Activated CD4-positive, alpha-beta memory T cell treated with anti-CD3 and anti-CD28 coated beads, Interleukin-2, amount 10 ng/mL, durations not matched to agents 7 days and 5 days (primary cell): ENCODE measurements at regions of chr6 and their contacts with region 1.

Region 1: GRCh38 chr6:32952817-32953739 is at the start of gene HLA-DMA:
- DNase-seq: peak; percentile 83
- H3K4me3 Mint-ChIP-seq: peak within 1 kb of the TSS; percentile 81
- H3K27ac Mint-ChIP-seq: peak within 1 kb of the TSS; percentile 67
- H3K4me1 Mint-ChIP-seq: peaks cover 56% of the 10 kb centered on the region
- H3K27me3 Mint-ChIP-seq: no peaks in the 10 kb centered on the region
- total RNA-seq, gene HLA-DMA: 54.0 to 54.3 TPM

Region 2: DNA sequence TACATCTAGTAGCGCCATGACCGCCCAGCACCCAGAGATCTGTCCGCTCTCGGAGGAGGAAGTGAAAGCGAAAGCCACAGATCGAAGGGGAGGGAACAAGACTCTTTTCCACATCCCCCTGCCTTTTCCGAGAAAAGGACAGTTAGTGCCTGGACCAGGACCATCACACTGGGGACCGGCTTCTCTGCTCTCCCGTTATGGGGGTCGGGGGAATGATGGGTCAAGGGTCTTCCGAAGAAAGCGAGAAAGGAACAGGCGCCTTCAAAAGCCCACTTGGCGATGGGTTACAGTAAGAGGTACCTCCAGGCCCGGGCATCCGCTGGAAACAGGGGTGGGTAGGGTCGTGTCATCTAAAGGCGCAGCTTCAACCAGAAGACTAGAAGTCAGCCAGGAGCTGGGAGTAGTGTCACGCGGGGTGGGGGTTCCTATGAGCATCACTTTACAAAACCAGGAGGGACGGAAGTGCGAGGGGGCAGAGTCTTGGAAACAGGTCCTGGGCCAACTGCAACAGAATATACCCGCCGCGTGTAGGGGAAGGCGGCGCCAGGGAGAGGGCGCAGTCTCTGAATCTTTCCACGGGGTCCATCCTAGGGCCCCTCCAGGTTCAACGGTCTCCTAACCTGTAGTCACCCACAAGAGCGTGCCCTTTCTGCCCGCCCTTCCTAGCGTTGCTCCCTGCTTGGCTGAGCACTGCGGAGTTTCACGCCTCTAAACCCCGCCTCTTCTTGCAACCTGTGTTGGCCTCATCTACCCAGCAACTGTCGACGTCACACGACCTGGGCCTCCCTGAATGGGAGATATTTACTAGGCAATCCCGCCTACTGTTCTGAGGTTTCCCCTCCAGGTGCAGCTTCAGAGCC is 108.9 kb before region 1 on chr6 and contains the start of gene PSMB8:
- CTCF ChIA-PET with region 1: interaction called, 37 read pairs
- POLR2A ChIA-PET with region 1: interaction called, 19 read pairs
- DNase-seq: peak; percentile 99
- H3K4me3 Mint-ChIP-seq: peak within 1 kb of the TSS; percentile 97
- H3K27ac Mint-ChIP-seq: peak within 1 kb of the TSS; percentile 99
- H3K4me1 Mint-ChIP-seq: peaks cover 69% of the 10 kb centered on the region
- H3K27me3 Mint-ChIP-seq: no peaks in the 10 kb centered on the region
- total RNA-seq, gene PSMB8: 389 to 401 TPM

Region 3: DNA sequence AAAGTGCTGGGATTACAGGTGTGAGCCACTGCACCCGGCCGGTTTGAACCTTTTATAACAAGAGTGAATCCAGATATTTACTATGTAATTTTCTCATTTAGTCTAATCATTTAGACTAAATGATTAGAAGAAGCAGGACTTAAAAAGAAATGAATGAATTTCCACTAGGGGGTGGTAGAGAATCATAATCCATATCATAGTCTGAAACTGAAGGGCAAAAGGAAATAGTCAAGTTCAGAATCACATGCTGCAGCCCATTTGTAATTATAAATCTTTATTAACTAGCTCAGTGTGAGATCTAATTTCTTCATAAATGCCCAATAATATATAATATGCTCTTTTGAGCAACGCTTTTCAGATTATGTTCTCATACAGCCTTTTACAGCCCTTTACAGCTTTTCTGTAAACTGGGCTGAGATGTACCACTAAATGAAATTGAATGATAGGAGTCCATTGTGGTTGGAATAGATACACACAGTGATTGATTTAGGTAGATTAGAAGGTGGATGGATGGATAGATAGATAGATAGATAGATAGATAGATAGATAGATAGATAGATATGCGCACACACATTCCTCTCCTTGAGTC is 67.3 kb before region 1 on chr6:
- CTCF ChIA-PET with region 1: interaction called, 43 read pairs
- POLR2A ChIA-PET with region 1: interaction called, 4 read pairs
- DNase-seq: no peak
- H3K4me3 Mint-ChIP-seq: no peak overlapping the region
- H3K27ac Mint-ChIP-seq: no peak overlapping the region
- H3K4me1 Mint-ChIP-seq: peaks cover 2% of the 10 kb centered on the region
- H3K27me3 Mint-ChIP-seq: peaks cover 4% of the 10 kb centered on the region

Region 4: DNA sequence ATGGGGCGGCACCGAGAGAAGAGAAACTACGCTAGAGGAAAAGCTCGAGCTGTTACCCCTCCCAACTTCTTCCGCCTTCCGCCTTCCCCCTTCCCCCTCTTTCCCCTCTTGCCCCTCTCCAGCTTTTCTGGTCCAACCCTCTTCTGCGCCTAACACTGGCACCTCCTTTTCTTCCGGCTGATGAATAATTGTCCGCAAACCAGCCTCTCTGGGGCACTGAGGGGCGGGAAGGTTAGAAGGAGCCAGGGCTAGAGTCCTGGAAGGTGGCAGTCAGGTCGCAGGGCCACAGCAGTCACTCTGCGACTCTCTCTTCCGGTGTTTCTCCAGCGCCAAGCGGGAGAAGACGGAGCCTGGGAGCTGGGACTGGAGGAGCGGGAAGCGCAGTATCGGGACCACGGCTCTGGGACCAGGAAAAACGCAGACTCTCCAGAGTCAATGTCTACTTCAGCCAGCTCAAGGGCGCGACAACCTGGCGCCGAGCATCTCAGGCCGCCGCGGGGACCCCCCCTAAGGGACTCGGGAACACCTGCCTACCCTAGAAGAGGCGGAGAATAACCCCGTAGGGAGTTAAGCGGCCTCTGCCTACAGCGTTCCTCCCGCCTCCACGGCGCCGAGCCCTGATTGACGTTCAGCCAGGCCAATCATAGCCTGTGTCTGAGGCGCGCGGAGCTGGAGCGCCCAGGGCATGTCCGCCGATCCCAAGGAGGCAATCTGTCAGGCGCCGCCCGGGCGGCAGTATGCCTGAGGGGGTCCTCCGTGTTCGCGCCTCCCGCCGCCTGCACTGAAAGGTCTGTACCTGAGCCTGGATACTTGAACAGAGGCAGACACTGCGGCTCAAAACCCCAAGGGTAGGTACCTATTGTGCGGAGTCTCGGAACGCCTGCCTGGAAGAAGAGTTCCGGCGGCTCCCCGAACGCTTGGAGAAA is 58.7 kb before region 1 on chr6:
- CTCF ChIA-PET with region 1: interaction called, 21 read pairs
- POLR2A ChIA-PET with region 1: interaction called, 26 read pairs
- DNase-seq: peak; percentile 95
- H3K4me3 Mint-ChIP-seq: peak overlapping the region; percentile 99
- H3K27ac Mint-ChIP-seq: peak overlapping the region; percentile 91
- H3K4me1 Mint-ChIP-seq: peaks cover 40% of the 10 kb centered on the region
- H3K27me3 Mint-ChIP-seq: peaks cover 8% of the 10 kb centered on the region

Region 5: DNA sequence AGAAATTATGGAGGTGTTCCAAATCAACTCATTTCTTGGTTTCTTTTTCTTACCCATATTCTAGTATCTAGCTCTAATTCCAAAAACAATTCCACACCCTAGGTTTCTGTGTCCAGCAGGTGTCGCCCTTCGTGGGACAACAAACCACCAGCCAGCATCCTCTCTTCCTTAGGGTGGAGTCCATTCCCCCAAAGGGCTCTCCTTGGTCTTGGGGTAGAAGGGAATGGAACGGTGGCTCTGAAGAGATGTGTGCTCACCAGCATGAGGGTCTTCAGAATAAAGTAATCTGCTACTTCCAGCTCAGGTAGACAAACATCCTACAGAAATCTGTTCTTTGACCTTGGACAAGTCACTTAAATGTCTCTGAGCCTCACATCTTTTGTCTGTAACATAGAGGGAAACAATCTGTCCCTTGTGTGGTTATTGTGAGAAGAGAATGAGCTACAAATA is 19.4 kb before region 1 on chr6:
- CTCF ChIA-PET with region 1: interaction called, 181 read pairs
- POLR2A ChIA-PET with region 1: interaction called, 15 read pairs
- DNase-seq: peak; percentile 79
- H3K4me3 Mint-ChIP-seq: no peak overlapping the region
- H3K27ac Mint-ChIP-seq: no peak overlapping the region
- H3K4me1 Mint-ChIP-seq: peaks cover 16% of the 10 kb centered on the region
- H3K27me3 Mint-ChIP-seq: peaks cover 2% of the 10 kb centered on the region

Region 6: GRCh38 chr6:32940656-32941213 is 12.3 kb before region 1 on chr6 and contains the start of gene HLA-DMB:
- CTCF ChIA-PET with region 1: interaction called, 136 read pairs
- POLR2A ChIA-PET with region 1: interaction called, 84 read pairs
- DNase-seq: peak; percentile 60
- H3K4me3 Mint-ChIP-seq: peak within 1 kb of the TSS; percentile 82
- H3K27ac Mint-ChIP-seq: peak within 1 kb of the TSS; percentile 94
- H3K4me1 Mint-ChIP-seq: peaks cover 59% of the 10 kb centered on the region
- H3K27me3 Mint-ChIP-seq: no peaks in the 10 kb centered on the region
- total RNA-seq, gene HLA-DMB: 19.1 to 20.0 TPM

Region 7: DNA sequence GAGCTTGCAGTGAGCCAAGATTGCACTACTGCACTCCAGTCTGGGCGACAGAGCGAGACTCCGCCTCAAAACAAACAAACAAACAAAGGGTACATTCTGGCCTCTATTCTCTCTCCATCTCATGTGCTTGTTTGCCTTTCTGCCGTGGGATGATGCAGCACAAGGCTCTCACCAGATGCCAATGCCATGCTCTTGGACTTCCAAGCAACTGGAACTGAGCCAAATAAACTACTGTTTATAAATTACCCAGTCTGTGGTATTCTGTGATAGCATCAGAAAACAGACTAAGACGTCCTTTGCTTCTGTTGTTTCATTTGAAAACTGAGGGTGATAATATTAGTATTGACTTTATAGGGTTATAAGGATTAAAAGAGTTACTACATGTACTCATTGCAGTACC is 11.7 kb after region 1 on chr6:
- CTCF ChIA-PET with region 1: interaction called, 259 read pairs
- POLR2A ChIA-PET with region 1: interaction called, 538 read pairs
- DNase-seq: no peak
- H3K4me3 Mint-ChIP-seq: no peak overlapping the region
- H3K27ac Mint-ChIP-seq: no peak overlapping the region
- H3K4me1 Mint-ChIP-seq: peaks cover 38% of the 10 kb centered on the region
- H3K27me3 Mint-ChIP-seq: no peaks in the 10 kb centered on the region